OCI-LY7 (cell line): ENCODE measurements at regions of chr7 and their contacts with region 1.

Region 1: DNA sequence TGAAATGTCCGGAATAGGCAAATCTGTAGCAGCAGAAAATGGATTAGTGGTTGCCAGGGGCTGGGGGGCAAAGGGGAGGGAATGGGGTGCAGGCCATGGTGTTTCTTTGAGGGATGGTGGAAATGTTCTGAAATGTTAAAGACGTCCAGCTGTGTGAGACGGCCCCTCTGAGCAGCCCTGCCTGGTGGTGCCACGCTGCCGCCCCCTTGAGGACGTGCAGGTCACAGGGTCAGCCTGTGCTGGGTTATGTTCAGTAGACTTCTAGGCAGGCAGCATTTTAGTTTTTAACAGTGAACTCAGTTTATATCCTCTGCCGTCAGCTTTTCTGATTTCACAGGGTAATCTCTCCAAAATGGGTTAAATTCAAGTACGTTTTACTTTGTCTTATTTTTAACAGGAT is 9.4 kb downstream of the NUB1 start:
- DNase-seq: peak; percentile 69
- H3K4me3 ChIP-seq: peak overlapping the region; percentile 7
- H3K27ac ChIP-seq: peak overlapping the region; percentile 94
- H3K4me1 ChIP-seq: peaks cover 58% of the 10 kb centered on the region
- CTCF ChIP-seq: peak; percentile 85

Region 2: GRCh38 chr7:151232091-151232916 is 118.7 kb before region 1 on chr7 and contains the start of gene CHPF2:
- CTCF ChIA-PET with region 1: interaction called, 8 read pairs
- POLR2A ChIA-PET with region 1: interaction called, 4 read pairs
- intact Hi-C with region 1: loop called (anchors 1 kb)
- DNase-seq: peak; percentile 90
- H3K4me3 ChIP-seq: peak within 1 kb of the TSS; percentile 86
- H3K27ac ChIP-seq: peak within 1 kb of the TSS; percentile 11
- H3K4me1 ChIP-seq: peaks cover 24% of the 10 kb centered on the region
- CTCF ChIP-seq: no peak
- total RNA-seq, gene CHPF2: 19.8 and 27.0 TPM in 2 replicates

Region 3: DNA sequence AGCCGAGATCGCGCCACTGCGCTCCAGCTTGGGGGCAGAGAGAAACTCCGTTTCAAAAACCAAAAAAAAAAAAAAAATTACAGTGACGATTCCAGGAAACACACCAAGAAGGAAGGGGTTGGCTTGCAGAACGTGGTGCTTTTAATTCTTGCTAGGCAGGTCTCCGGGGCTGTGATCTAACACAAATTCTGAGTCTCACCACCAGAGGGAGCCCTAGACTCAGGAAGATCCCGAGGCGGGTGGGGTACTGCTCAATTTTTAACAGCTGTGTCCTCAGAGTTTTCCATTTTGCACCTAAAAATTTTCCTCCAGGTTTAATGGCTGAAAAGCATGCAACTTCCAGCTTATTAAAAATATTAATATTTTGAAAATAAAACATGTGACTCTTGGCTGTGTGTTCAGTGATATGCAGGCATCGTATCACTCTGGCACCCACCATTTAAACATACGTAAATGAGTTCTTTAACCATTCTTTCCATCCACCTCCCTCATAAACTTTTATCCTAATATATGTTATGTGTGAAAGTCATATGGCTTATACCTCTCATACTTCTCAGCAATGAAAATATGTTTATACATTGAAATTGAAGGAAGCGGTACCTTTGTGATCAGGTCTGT is 35.9 kb before region 1 on chr7:
- CTCF ChIA-PET with region 1: interaction called, 8 read pairs
- POLR2A ChIA-PET with region 1: interaction called, 7 read pairs
- intact Hi-C with region 1: loop called (anchors 1 kb)
- DNase-seq: peak; percentile 82
- H3K4me3 ChIP-seq: no peak overlapping the region
- H3K27ac ChIP-seq: no peak overlapping the region
- H3K4me1 ChIP-seq: peaks cover 5% of the 10 kb centered on the region
- CTCF ChIP-seq: peak; percentile 88

Region 4: DNA sequence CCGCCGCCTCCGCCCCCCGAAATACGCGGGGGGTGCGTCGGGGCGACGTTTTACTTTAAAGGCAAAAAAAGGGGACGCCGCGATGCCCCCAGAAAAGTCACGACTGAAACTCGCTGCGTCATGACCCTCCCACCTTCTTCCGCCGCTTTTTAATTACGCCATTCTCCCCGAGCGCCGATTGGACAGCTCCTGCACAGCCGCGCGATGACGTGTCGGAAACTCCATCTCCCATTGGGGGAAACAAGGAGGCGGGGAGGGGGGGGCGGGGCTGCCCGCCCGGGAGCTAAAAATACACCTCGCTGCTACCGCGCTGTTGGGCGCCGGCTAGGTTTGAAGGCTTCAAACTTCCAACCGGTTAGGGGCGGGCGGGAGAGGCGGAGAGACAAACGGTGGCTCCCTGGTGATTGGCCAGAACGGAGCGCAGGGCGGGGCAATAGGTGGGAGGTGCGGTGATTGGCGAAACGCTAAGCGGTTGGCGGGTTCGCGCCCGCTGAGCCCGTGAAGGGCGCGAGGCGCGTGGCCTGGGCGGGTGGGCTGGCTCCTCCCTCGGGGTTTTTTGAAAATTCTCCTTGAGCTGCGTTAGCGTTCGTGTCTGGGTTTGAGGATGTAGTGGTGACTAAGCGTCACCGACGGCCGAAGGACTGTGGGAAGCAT is 168.9 kb after region 1 on chr7 and contains the start of gene RHEB:
- CTCF ChIA-PET with region 1: no interaction called
- POLR2A ChIA-PET with region 1: no interaction called
- intact Hi-C with region 1: loop called (anchors 2 kb)
- DNase-seq: peak; percentile 98
- H3K4me3 ChIP-seq: peak within 1 kb of the TSS; percentile 90
- H3K27ac ChIP-seq: peak within 1 kb of the TSS; percentile 85
- H3K4me1 ChIP-seq: peaks cover 19% of the 10 kb centered on the region
- CTCF ChIP-seq: no peak
- total RNA-seq, gene RHEB: 57.6 and 88.0 TPM in 2 replicates